Calu3 (cell line): ENCODE measurements at regions of chr5 and their contacts with region 1.

Region 1: GRCh38 chr5:10145923-10146401 is 103.7 kb downstream of the ATPSCKMT start:
- DNase-seq: no peak
- H3K4me3 Mint-ChIP-seq: no peak overlapping the region
- H3K27ac Mint-ChIP-seq: no peak overlapping the region
- H3K4me1 Mint-ChIP-seq: no peaks in the 10 kb centered on the region
- H3K27me3 Mint-ChIP-seq: no peaks in the 10 kb centered on the region
- CTCF ChIP-seq: peak; percentile 37

Region 2: DNA sequence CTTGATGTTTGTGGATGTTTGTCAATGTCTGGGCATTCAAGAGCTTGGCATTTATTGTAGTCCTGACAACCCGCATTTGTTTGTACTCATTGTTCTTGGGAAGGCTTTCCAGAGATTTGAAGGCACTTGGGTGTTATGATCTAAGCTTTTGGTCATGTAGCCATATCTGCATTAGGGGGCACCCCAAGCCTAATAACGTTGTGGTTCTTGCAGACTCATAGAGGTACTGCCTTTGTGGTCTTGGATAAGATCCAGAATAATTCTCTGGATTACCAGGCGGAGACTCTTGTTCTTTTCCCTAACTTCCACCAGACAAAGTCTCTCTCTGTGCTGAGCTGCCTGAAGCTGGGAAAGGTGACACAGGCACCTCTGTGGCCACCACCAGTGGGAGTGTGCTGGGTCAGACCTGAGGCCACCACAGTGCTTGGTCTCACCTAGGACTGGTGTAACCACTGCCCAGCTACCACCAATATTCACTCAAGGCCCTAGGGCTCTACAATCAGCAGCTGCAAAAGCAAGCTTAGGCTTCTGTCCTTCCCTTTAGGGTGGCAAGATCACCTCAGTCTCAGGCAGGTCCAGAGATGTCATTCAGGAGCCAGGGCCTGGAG is 371.4 kb before region 1 on chr5:
- CTCF ChIA-PET with region 1: no interaction called
- intact Hi-C with region 1: loop called (anchors 1 kb)
- DNase-seq: peak; percentile 6
- H3K4me3 Mint-ChIP-seq: no peak overlapping the region
- H3K27ac Mint-ChIP-seq: no peak overlapping the region
- H3K4me1 Mint-ChIP-seq: no peaks in the 10 kb centered on the region
- H3K27me3 Mint-ChIP-seq: peaks cover 26% of the 10 kb centered on the region
- CTCF ChIP-seq: no peak

Region 3: DNA sequence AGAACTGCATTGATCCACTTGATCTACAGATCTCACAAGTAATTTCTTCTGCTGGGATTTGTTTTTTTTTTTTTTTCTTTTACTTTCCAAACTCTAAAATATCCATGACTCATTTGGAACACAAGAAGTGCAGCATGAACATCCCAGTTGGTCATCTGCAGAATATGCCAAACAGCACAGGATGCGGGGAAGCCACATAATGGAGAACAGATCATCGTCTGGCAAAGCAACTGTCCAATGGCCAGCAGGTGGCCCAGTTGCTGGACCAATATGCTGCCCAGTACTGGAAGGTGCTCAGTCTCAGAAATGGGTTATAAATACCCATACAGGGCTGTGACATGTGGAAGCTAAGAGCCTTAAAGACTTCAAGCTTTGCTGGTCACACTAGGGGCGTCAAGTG is 294.5 kb before region 1 on chr5:
- CTCF ChIA-PET with region 1: no interaction called
- intact Hi-C with region 1: loop called (anchors 1 kb)
- DNase-seq: peak; percentile 30
- H3K4me3 Mint-ChIP-seq: no peak overlapping the region
- H3K27ac Mint-ChIP-seq: no peak overlapping the region
- H3K4me1 Mint-ChIP-seq: no peaks in the 10 kb centered on the region
- H3K27me3 Mint-ChIP-seq: peaks cover 87% of the 10 kb centered on the region
- CTCF ChIP-seq: peak; percentile 22